CD4-positive, alpha-beta T cell (primary cell): ENCODE measurements at regions of chr11 and their contacts with region 1.

Region 1: DNA sequence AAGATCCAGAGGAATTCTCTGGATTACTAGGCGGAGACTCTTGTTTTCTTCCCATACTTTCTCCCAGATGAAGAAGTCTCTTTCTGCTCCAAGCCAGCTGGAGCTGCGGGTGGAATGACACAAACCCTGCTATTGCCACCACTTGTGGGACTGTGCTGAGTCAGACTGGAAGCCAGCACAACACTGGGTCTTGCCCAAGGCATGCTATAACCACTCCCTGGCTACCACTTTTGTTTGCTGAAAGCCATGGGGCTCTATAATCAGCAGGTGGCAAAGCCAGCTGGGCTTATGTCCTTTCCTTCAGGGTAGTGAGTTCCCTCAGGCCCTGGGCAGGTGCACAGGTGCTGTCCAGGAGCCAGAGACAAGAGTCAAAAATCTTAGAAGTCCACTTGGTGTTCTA is 9.1 kb downstream of the OR4S1 start:
- DNase-seq: no peak
- ATAC-seq: no peak
- H3K4me3 ChIP-seq: no peak overlapping the region
- H3K4me3 Mint-ChIP-seq: no peak overlapping the region
- H3K27ac ChIP-seq: no peak overlapping the region
- H3K27ac Mint-ChIP-seq: no peak overlapping the region
- H3K4me1 ChIP-seq: no peaks in the 10 kb centered on the region
- H3K4me1 Mint-ChIP-seq: no peaks in the 10 kb centered on the region
- H3K27me3 ChIP-seq: peaks cover 0 to 5% of the 10 kb centered on the region in 2 experiments
- H3K27me3 Mint-ChIP-seq: peaks cover 20% of the 10 kb centered on the region
- CTCF ChIP-seq: no peak

Region 2: GRCh38 chr11:48172818-48173609 is 142.1 kb before region 1 on chr11:
- CTCF ChIA-PET with region 1: no interaction called
- POLR2A ChIA-PET with region 1: no interaction called
- intact Hi-C with region 1: no loop called
- DNase-seq: peak; percentile 39 to 74 (median 58)
- ATAC-seq: peak; percentile 73
- H3K4me3 ChIP-seq: no peak overlapping the region
- H3K4me3 Mint-ChIP-seq: no peak overlapping the region
- H3K27ac ChIP-seq: no peak overlapping the region
- H3K27ac Mint-ChIP-seq: peak overlapping the region; percentile 18
- H3K4me1 ChIP-seq: peaks cover 7% of the 10 kb centered on the region
- H3K4me1 Mint-ChIP-seq: peaks cover 19% of the 10 kb centered on the region
- H3K27me3 ChIP-seq: no peaks in the 10 kb centered on the region
- H3K27me3 Mint-ChIP-seq: no peaks in the 10 kb centered on the region
- CTCF ChIP-seq: peak; percentile 81

Region 3: DNA sequence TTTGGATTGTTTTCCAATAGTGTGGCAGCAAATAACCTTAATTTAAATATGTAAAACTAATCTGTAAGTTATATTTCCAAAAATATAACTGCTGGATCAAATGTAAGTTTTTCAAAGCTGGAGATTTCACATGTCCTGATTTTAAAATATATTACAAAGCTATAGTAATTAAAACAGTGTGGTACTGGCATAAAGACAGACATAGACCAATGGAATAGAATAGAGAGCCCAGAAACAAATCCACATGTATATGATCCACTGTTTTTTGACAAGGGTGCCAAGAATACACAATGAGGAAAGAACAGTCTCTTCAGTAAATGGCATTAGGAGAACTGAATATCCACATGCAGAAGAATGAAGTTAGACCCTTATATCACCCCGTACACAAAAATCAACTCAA is 66.2 kb before region 1 on chr11:
- CTCF ChIA-PET with region 1: no interaction called
- POLR2A ChIA-PET with region 1: no interaction called
- intact Hi-C with region 1: no loop called
- DNase-seq: no peak
- ATAC-seq: no peak
- H3K4me3 ChIP-seq: no peak overlapping the region
- H3K4me3 Mint-ChIP-seq: no peak overlapping the region
- H3K27ac ChIP-seq: no peak overlapping the region
- H3K27ac Mint-ChIP-seq: no peak overlapping the region
- H3K4me1 ChIP-seq: no peaks in the 10 kb centered on the region
- H3K4me1 Mint-ChIP-seq: no peaks in the 10 kb centered on the region
- H3K27me3 ChIP-seq: peaks cover 0 to 4% of the 10 kb centered on the region in 2 experiments
- H3K27me3 Mint-ChIP-seq: peaks cover 46% of the 10 kb centered on the region
- CTCF ChIP-seq: no peak

Region 4: DNA sequence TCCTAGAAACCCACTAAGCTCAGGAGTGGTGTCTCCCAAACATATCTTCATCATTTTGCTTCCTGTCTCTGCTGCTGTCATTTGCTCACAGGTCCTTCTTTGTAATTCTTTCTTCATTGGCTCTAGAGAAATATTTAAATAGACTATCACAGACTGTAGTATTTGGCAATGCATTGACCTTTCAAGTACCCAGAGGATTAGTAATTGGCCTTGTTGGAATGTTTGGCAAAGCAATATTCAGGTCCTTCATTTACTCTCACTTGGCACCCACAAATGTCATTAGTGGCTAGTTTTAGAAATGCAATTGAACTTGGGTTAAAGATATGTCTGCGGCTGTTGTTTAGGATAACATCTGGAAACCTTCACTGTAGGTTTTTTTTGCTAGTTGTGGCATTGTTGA is 39.6 kb after region 1 on chr11:
- CTCF ChIA-PET with region 1: no interaction called
- POLR2A ChIA-PET with region 1: no interaction called
- intact Hi-C with region 1: no loop called
- DNase-seq: no peak
- ATAC-seq: no peak
- H3K4me3 ChIP-seq: no peak overlapping the region
- H3K4me3 Mint-ChIP-seq: no peak overlapping the region
- H3K27ac ChIP-seq: no peak overlapping the region
- H3K27ac Mint-ChIP-seq: no peak overlapping the region
- H3K4me1 ChIP-seq: no peaks in the 10 kb centered on the region
- H3K4me1 Mint-ChIP-seq: no peaks in the 10 kb centered on the region
- H3K27me3 ChIP-seq: no peaks in the 10 kb centered on the region
- H3K27me3 Mint-ChIP-seq: peaks cover 5% of the 10 kb centered on the region
- CTCF ChIP-seq: no peak

Region 5: GRCh38 chr11:49505231-49505630 is 1190.1 kb after region 1 on chr11:
- CTCF ChIA-PET with region 1: no interaction called
- POLR2A ChIA-PET with region 1: no interaction called
- intact Hi-C with region 1: loop called in 1 of 2 experiments (anchors 10 kb)
- DNase-seq: no peak
- ATAC-seq: no peak
- H3K4me3 ChIP-seq: no peak overlapping the region
- H3K4me3 Mint-ChIP-seq: no peak overlapping the region
- H3K27ac ChIP-seq: no peak overlapping the region
- H3K27ac Mint-ChIP-seq: no peak overlapping the region
- H3K4me1 ChIP-seq: no peaks in the 10 kb centered on the region
- H3K4me1 Mint-ChIP-seq: no peaks in the 10 kb centered on the region
- H3K27me3 ChIP-seq: no peaks in the 10 kb centered on the region
- H3K27me3 Mint-ChIP-seq: no peaks in the 10 kb centered on the region
- CTCF ChIP-seq: no peak